Activated CD8-positive, alpha-beta T cell treated with anti-CD3 and anti-CD28 coated beads for 36 hours (primary cell): ENCODE measurements at regions of chr11 and their contacts with region 1.

Region 1: GRCh38 chr11:13289081-13289480 is 11.5 kb downstream of the BMAL1 start:
- DNase-seq: no peak
- ATAC-seq: no peak
- H3K4me3 Mint-ChIP-seq: no peak overlapping the region
- H3K27ac Mint-ChIP-seq: peak overlapping the region; percentile 85
- H3K4me1 Mint-ChIP-seq: peaks cover 89% of the 10 kb centered on the region
- H3K27me3 Mint-ChIP-seq: no peaks in the 10 kb centered on the region
- CTCF ChIP-seq: no peak

Region 2: DNA sequence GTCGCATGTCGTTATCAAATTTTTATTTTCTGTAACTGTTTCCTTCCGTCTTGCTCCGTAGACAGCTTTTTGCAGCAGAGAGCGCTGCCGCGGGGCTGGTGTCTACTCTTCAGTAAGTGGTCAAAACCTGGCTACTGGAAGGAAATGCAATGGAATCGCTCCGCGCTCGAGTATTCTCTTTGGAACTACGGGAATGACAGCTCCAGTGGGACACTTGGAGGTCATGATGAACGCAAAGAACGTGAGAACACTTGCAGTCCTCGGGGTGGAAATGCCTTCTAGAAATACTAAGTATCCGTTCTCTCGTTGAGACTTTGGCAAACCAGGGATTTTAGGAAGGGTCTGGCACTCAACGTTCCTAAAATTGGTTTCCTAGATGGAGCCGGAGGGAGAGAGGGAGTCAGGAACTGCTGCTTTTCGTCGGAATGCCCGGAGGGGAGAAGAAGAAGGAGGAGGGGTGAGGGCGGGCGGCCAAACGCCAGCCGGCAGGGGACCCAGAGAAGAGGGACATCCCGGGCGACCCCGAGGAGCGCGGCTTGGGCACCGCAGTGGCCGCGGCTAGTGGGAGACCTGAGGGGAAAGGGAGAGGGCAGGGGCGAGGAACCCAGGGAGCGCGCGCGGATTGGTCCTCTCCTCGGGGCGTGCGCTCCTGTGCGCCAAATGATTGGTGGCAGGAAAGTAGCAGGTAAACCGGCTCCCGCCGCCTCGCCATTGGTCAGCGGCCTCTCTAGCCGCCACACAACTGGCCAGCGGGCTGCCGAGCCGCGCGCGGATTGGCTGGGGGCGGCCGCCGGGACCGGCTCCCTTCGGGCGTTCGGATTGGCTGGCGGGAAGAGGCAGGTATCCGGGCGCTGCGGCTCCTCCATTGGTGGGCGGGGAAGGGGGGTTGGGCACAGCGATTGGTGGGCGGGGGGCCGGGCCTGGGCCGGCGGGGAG is 12.0 kb before region 1 on chr11:
- CTCF ChIA-PET with region 1: interaction called, 4 read pairs
- POLR2A ChIA-PET with region 1: interaction called, 15 read pairs
- intact Hi-C with region 1: no loop called
- DNase-seq: peak; percentile 95
- ATAC-seq: peak; percentile 88
- H3K4me3 Mint-ChIP-seq: peak overlapping the region; percentile 93
- H3K27ac Mint-ChIP-seq: peak overlapping the region; percentile 85
- H3K4me1 Mint-ChIP-seq: peaks cover 43% of the 10 kb centered on the region
- H3K27me3 Mint-ChIP-seq: peaks cover 6% of the 10 kb centered on the region
- CTCF ChIP-seq: no peak